ENCODE measurements at regions of chr5 and their contacts with region 1.

Region 1: GRCh38 chr5:10157085-10157669 is 92.5 kb downstream of the ATPSCKMT start:
- DNase-seq: no peak
- ATAC-seq: no peak
- H3K4me3 ChIP-seq: no peak overlapping the region
- H3K27ac ChIP-seq: no peak overlapping the region
- H3K4me1 ChIP-seq: no peaks in the 10 kb centered on the region
- H3K27me3 ChIP-seq: no peaks in the 10 kb centered on the region
- CTCF ChIP-seq: no peak

Region 2: DNA sequence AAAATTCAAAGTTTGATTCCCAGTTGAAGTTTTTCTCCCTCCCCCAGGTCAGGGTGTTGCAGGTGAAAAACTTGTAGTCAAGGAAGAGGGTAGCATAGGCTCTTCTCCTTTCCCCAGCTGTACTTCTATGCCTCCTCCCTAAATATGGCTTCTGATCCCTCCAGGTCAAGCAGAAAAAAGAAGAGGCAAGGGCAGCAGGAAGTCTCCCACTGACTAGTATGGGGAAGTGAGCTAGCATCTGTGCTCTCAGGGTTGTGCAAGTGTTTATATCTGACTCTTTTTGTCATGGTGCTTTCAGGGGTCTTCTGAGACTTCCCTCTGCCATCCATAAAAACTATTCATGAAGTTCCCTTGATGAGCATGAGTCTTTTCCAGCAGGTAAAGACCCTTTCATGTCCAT is 16.5 kb after region 1 on chr5:
- CTCF ChIA-PET with region 1: no interaction called
- POLR2A ChIA-PET with region 1: interaction called, 14 read pairs
- intact Hi-C with region 1: no loop called
- DNase-seq: no peak
- ATAC-seq: no peak
- H3K4me3 ChIP-seq: no peak overlapping the region
- H3K27ac ChIP-seq: no peak overlapping the region
- H3K4me1 ChIP-seq: no peaks in the 10 kb centered on the region
- H3K27me3 ChIP-seq: no peaks in the 10 kb centered on the region
- CTCF ChIP-seq: no peak